Activated T-helper 1 cell treated with anti-CD3 and anti-CD28 coated beads, Interleukin-12 subunit alpha, Interleukin-12 subunit beta, Interleukin-2, Interleukin-4 antibody, amounts not matched to agents 30 ng/mL and 10 ng/mL and 1 ng/mL, durations not matched to agents 14 hours and 24 hours and 36 hours (primary cell): ENCODE measurements at regions of chr15 and their contacts with region 1.

Region 1: GRCh38 chr15:82809404-82810060 is at the start of gene WHAMM:
- DNase-seq: peak; percentile 95
- H3K4me3 Mint-ChIP-seq: peak within 1 kb of the TSS; percentile 92
- H3K27ac Mint-ChIP-seq: peak within 1 kb of the TSS; percentile 94
- H3K4me1 Mint-ChIP-seq: peaks cover 34% of the 10 kb centered on the region
- H3K27me3 Mint-ChIP-seq: peaks cover 19% of the 10 kb centered on the region
- total RNA-seq, gene WHAMM: 7.1 and 7.5 TPM in 2 replicates

Region 2: DNA sequence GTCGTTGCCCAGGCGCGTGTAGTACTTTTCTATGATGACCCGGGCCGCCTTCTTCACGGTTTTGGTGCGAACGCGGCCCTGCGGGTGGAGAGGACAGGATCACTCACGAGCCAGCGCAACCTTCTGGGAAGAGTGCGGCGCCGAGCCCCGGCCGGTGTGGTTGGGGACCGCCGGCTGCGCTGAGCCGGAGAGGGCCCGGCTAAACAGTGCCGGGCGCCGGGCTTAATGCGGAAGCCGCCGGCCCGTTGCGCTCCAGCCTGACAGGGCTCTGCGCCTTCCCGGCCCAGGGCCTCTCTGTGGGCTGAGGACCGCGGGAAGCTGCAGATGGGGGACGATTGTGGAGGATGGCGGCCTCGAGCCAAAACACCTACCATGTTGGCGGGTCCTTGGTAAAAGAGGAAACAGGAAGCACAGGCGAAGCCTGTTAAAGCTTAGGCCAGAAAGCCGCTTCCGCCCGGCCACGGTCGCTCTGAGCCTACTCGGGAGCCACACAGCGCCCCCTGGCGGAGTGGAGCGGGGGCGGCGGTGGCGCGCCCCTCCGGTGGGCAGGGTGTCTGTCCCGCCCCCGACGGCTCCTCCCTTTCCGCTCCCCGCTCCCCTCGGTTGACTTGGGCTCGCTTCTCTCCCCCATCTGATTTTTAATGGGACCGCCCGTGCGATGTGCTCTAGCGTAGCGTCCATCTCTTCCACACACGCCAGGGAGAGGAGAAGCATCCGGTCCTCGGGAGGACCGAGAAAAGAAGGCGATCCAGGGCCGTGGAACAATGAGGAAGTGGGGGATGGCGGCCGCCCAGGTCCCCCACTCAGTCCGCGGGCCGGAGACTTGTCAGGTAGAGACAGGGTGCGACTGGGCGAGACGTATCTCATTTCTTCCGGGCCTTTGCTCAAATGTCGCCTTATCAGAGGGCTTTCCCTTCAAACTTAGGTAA is 269.2 kb before region 1 on chr15 and contains the start of gene RPS17:
- intact Hi-C with region 1: loop called (anchors 1 kb)
- DNase-seq: peak; percentile 98
- H3K4me3 Mint-ChIP-seq: peak within 1 kb of the TSS; percentile 91
- H3K27ac Mint-ChIP-seq: peak within 1 kb of the TSS; percentile 94
- H3K4me1 Mint-ChIP-seq: peaks cover 33% of the 10 kb centered on the region
- H3K27me3 Mint-ChIP-seq: no peaks in the 10 kb centered on the region
- total RNA-seq, gene RPS17: 2,478 and 2,503 TPM in 2 replicates

Region 3: GRCh38 chr15:82950746-82951370 is 141.3 kb after region 1 on chr15:
- intact Hi-C with region 1: loop called (anchors 1 kb)
- DNase-seq: no peak
- H3K4me3 Mint-ChIP-seq: no peak overlapping the region
- H3K27ac Mint-ChIP-seq: no peak overlapping the region
- H3K4me1 Mint-ChIP-seq: no peaks in the 10 kb centered on the region
- H3K27me3 Mint-ChIP-seq: peaks cover 22% of the 10 kb centered on the region

Region 4: DNA sequence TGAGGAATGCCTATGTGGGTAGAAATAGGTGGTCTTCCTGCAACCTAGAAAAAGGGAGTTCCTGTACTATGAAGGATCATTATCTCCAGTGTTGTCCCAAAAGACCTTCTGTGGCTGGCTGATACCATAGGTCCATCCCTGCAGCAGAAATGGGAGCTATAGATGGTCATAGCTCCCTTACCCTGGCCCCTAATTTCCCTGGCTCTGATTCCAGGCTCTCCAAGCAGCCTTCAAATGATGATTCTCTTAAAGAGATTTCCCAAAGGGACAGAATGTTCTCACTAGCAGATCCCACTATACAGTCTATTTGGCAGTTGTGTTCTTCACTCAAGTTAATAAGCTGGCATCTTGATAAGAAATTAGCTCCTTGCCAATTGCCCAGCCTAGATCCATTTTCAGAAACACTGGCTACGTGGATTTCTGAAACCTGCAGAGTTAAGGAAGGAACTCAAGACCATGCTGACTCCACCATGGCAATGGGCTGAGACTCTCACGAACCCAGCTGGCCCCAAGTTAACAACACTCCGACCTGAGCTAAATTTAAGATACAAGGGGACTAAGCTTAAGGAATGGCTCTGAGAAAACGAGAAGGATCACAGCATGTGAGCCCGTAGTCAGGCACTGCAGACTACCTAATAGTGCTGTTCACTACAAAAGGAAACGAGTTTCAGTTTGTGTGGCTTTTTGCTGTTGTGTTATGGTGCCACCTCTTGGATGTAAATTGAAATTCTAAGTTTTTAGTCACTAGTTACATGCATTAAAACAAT is 190.6 kb after region 1 on chr15:
- intact Hi-C with region 1: loop called (anchors 2 kb)
- DNase-seq: peak; percentile 28
- H3K4me3 Mint-ChIP-seq: peak overlapping the region; percentile 60
- H3K27ac Mint-ChIP-seq: peak overlapping the region; percentile 9
- H3K4me1 Mint-ChIP-seq: peaks cover 9% of the 10 kb centered on the region
- H3K27me3 Mint-ChIP-seq: no peaks in the 10 kb centered on the region

Region 5: GRCh38 chr15:83164111-83164770 is 354.7 kb after region 1 on chr15:
- intact Hi-C with region 1: loop called (anchors 1 kb)
- DNase-seq: no peak
- H3K4me3 Mint-ChIP-seq: peak overlapping the region; percentile 66
- H3K27ac Mint-ChIP-seq: peak overlapping the region; percentile 87
- H3K4me1 Mint-ChIP-seq: peaks cover 63% of the 10 kb centered on the region
- H3K27me3 Mint-ChIP-seq: peaks cover 1% of the 10 kb centered on the region